GM18951 (cell line): ENCODE measurements at regions of chr3 and their contacts with region 1.

Region 1: DNA sequence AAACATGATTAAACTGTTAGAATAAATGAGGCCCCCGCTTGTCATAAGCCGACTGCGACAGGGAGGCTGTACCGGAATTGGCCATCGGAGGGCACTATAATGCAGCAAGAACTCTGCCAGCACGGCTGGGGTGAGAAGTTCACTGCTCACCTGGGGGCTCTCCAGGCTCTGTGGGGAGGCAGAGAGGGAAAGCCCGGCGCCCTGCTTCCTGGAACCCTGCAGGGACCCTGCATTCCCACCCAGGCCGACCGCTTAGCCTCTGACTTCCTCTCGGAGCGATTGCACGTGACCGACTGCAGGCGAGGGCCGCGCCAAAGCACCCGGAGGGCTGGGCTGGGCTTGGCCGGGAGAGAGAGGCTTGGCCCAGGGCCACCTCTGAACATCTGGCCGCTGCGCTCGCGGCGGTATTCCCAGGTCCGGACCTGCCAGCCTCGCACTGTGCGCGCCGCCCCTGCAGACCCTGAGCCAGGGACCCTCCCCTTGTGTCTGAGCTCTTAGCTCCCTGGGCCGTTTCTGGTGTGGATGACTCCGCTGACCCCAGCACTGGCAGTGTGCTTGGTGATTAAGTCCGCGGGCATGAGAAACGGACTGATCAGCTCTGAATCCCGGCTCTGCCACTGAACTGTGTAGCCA is 26.2 kb downstream of the DRD3 start:
- POLR2A ChIP-seq: no peak

Region 2: GRCh38 chr3:114418724-114419543 is 266.3 kb after region 1 on chr3:
- in situ Hi-C with region 1: loop called (anchors 10 kb)
- POLR2A ChIP-seq: no peak